OCI-LY7 (cell line): ENCODE measurements at regions of chr7 and their contacts with region 1.

Region 1: GRCh38 chr7:77798394-77799077 is at the starts of genes PHTF2 and TMEM60:
- DNase-seq: peak; percentile 99
- H3K4me3 ChIP-seq: peak within 1 kb of the TSS; percentile 87
- H3K27ac ChIP-seq: peak within 1 kb of the TSS; percentile 67
- H3K4me1 ChIP-seq: peaks cover 61% of the 10 kb centered on the region
- CTCF ChIP-seq: peak; percentile 65; the same call in 1 of the 2 replicates
- total RNA-seq, gene PHTF2: 26.9 and 29.6 TPM in 2 replicates
- total RNA-seq, gene TMEM60: 14.6 and 19.2 TPM in 2 replicates

Region 2: DNA sequence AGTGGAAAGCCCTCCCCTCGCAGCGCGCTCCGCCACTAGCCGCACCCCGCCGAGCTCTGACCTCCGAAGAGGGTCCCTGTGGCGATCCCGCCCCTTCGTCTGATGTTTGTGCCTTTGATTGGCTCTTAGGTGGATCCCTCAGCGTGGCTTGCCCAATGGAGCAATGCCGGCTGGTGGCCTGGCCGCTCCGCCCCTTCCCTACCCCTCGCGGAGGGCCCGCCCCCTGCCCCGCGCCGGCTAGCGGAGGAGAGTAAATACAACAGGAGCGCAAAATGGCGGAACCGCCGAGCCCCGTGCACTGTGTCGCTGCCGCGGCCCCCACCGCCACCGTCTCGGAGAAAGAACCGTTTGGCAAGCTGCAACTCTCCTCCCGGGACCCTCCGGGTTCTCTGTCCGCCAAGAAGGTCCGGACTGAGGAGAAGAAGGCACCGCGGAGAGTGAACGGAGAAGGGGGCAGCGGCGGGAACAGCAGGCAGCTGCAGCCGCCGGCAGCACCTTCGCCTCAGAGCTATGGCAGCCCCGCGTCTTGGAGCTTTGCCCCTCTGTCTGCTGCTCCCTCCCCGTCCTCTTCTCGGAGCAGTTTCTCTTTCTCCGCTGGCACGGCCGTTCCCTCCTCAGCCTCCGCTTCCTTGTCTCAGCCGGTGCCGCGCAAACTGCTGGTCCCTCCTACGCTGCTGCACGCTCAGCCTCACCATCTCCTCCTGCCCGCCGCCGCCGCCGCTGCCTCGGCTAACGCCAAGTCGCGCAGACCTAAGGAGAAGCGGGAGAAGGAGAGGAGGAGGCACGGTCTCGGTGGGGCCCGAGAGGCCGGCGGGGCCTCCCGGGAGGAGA is 102.1 kb before region 1 on chr7 and contains the start of gene RSBN1L:
- CTCF ChIA-PET with region 1: no interaction called
- POLR2A ChIA-PET with region 1: interaction called, 4 read pairs
- intact Hi-C with region 1: loop called (anchors 2 kb)
- DNase-seq: peak; percentile 98
- H3K4me3 ChIP-seq: peak within 1 kb of the TSS; percentile 99
- H3K27ac ChIP-seq: peak within 1 kb of the TSS; percentile 85
- H3K4me1 ChIP-seq: peaks cover 29% of the 10 kb centered on the region
- CTCF ChIP-seq: 0 out of 2 replicates have a peak, but pooled peaks have one; percentile 31
- total RNA-seq, gene RSBN1L: 23.3 and 27.4 TPM in 2 replicates

Region 3: GRCh38 chr7:77823787-77824186 is 25.3 kb after region 1 on chr7:
- CTCF ChIA-PET with region 1: no interaction called
- POLR2A ChIA-PET with region 1: interaction called, 4 read pairs
- intact Hi-C with region 1: loop called (anchors 2 kb)
- DNase-seq: no peak
- H3K4me3 ChIP-seq: peak overlapping the region; percentile 55
- H3K27ac ChIP-seq: peak overlapping the region; percentile 94
- H3K4me1 ChIP-seq: peaks cover 67% of the 10 kb centered on the region
- CTCF ChIP-seq: no peak

Region 4: GRCh38 chr7:77903597-77903996 is 105.1 kb after region 1 on chr7:
- CTCF ChIA-PET with region 1: no interaction called
- POLR2A ChIA-PET with region 1: interaction called, 6 read pairs
- intact Hi-C with region 1: loop called (anchors 1 kb)
- DNase-seq: peak; percentile 72
- H3K4me3 ChIP-seq: no peak overlapping the region
- H3K27ac ChIP-seq: peak overlapping the region; percentile 97
- H3K4me1 ChIP-seq: peaks cover 69% of the 10 kb centered on the region
- CTCF ChIP-seq: peak; percentile 79

Region 5: GRCh38 chr7:77940647-77941046 is 142.1 kb after region 1 on chr7:
- CTCF ChIA-PET with region 1: no interaction called
- POLR2A ChIA-PET with region 1: interaction called, 7 read pairs
- intact Hi-C with region 1: loop called (anchors 2 kb)
- DNase-seq: peak; percentile 38
- H3K4me3 ChIP-seq: no peak overlapping the region
- H3K27ac ChIP-seq: no peak overlapping the region
- H3K4me1 ChIP-seq: peaks cover 29% of the 10 kb centered on the region
- CTCF ChIP-seq: peak; percentile 96